Head of caudate nucleus (tissue), 42 donors: ENCODE measurements at regions of chr12 and their contacts with region 1.

Region 1: DNA sequence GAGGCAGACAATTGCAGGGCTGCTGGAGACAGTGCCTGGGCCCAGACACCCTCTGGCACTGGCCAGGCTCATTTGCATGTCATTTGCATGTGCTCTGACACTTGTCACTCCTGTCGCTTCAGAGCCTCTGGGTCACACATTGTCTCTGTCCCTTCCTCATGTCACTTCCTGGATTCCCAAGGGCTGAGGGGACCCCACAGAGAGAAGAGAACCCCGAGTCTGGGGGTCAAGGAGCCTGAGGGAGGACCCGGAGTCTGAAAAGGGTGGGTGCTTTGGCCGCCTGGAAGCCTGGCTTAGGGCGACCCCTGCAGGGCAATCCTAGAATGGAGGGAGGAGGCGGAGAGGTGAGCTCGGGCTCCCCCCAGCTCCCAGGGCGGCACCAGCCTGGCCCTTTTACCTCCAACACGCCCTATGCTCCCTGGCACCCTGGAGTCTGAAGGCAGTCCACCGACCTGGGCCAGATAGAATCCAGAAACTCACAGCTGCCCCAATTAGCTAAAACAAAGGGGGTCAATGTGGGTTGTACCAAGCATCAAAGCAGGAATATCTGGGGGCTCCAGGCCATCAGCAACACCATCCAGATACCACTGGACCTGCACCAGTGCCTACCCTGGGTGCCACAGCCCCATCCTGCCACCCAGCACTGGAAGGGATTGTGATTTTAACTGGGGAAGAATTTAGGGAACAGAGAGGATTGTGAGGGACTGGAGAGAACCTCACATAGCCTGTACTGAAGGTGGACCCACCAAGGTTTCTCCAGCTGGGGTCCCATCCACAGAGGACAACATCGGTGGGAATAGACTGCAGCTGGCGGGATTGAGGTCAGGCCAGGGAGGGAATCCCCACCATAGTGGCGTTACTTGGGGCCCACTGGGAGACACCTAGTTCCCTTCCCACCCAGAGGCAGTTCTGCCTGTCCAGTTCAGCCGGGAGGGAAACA is 21.8 kb upstream of the KRT78 start:
- DNase-seq: peak; percentile 31 to 82 (median 60)

Region 2: DNA sequence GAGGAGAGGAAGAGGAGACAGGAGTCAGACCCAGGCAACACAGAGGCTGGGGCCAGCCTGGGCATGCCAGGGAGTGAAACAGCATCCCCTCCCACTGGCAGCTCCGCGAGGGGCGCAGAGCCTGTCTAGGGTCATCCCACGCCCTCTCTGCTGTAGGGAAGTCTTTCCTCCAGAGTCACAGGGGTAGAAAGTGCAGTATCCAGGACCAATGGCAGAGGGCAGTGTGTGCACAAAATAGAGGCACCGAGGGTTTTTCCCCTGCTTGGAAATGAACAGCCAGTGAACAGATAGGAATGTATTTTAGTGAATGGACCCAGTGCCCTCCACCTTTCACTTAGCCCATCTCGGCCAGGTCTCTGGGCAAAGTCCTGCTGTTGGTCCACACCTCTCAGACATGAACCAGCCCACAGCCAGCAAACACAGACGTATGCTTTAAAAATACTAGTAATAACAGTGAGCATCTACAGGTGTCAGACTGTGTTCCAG is 287.6 kb before region 1 on chr12:
- intact Hi-C with region 1: loop called (anchors 5 kb)
- DNase-seq: peak; percentile 22 to 82 (median 62)

Region 3: GRCh38 chr12:53287741-53288216 is 417.2 kb after region 1 on chr12:
- intact Hi-C with region 1: no loop called
- DNase-seq: peak; percentile 36 to 87 (median 73)